Activated CD8-positive, alpha-beta T cell treated with anti-CD3 and anti-CD28 coated beads, Interleukin-2, amount 10 ng/mL, durations not matched to agents 7 days and 5 days (primary cell): ENCODE measurements at regions of chr3 and their contacts with region 1.

Region 1: GRCh38 chr3:170414202-170414663 is 4.4 kb upstream of the CLDN11 start:
- DNase-seq: peak; percentile 53
- ATAC-seq: peak; percentile 63
- H3K4me3 Mint-ChIP-seq: no peak overlapping the region
- H3K27ac Mint-ChIP-seq: no peak overlapping the region
- H3K4me1 Mint-ChIP-seq: peaks cover 7% of the 10 kb centered on the region
- H3K27me3 Mint-ChIP-seq: peaks cover 27% of the 10 kb centered on the region

Region 2: GRCh38 chr3:170211668-170212067 is 202.6 kb before region 1 on chr3:
- CTCF ChIA-PET with region 1: no interaction called
- POLR2A ChIA-PET with region 1: no interaction called
- DNase-seq: no peak
- ATAC-seq: no peak
- H3K4me3 Mint-ChIP-seq: no peak overlapping the region
- H3K27ac Mint-ChIP-seq: no peak overlapping the region
- H3K4me1 Mint-ChIP-seq: no peaks in the 10 kb centered on the region
- H3K27me3 Mint-ChIP-seq: peaks cover 6% of the 10 kb centered on the region

Region 3: GRCh38 chr3:170257145-170257544 is 157.1 kb before region 1 on chr3:
- CTCF ChIA-PET with region 1: no interaction called
- POLR2A ChIA-PET with region 1: no interaction called
- DNase-seq: no peak
- ATAC-seq: no peak
- H3K4me3 Mint-ChIP-seq: no peak overlapping the region
- H3K27ac Mint-ChIP-seq: peak overlapping the region; percentile 37
- H3K4me1 Mint-ChIP-seq: peaks cover 23% of the 10 kb centered on the region
- H3K27me3 Mint-ChIP-seq: no peaks in the 10 kb centered on the region

Region 4: GRCh38 chr3:170337420-170337819 is 76.8 kb before region 1 on chr3:
- CTCF ChIA-PET with region 1: no interaction called
- POLR2A ChIA-PET with region 1: no interaction called
- DNase-seq: no peak
- ATAC-seq: no peak
- H3K4me3 Mint-ChIP-seq: no peak overlapping the region
- H3K27ac Mint-ChIP-seq: no peak overlapping the region
- H3K4me1 Mint-ChIP-seq: no peaks in the 10 kb centered on the region
- H3K27me3 Mint-ChIP-seq: no peaks in the 10 kb centered on the region

Region 5: DNA sequence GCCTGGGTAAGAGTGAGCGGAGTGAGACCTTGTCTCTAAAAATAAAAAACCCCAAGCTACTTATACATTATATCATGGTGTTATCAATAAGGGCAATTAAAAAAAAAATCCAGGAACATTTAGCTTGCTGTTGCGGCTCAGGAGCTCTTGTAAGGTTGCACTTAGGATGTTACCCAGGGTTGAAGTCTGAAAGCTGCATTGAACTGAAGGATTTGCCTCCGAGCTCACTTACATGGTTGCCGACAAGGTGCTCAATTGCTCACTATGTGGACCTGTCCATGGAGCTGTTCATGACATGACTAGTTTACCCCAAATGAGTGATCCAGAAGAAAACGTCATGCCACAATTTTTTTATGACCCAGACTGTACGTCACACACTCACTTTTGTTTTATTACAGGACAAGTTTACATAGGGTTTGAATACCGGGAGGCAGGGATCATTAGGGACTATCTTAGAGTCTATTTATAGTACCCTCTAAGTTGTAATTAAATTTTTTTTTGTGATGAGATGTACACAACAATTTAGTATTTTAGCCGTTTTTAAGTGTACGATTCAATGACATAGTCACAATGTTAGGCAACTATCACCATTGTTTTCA is 16.6 kb before region 1 on chr3:
- CTCF ChIA-PET with region 1: interaction called, 23 read pairs
- POLR2A ChIA-PET with region 1: interaction called, 3 read pairs
- DNase-seq: no peak
- ATAC-seq: no peak
- H3K4me3 Mint-ChIP-seq: no peak overlapping the region
- H3K27ac Mint-ChIP-seq: no peak overlapping the region
- H3K4me1 Mint-ChIP-seq: no peaks in the 10 kb centered on the region
- H3K27me3 Mint-ChIP-seq: no peaks in the 10 kb centered on the region

Region 6: DNA sequence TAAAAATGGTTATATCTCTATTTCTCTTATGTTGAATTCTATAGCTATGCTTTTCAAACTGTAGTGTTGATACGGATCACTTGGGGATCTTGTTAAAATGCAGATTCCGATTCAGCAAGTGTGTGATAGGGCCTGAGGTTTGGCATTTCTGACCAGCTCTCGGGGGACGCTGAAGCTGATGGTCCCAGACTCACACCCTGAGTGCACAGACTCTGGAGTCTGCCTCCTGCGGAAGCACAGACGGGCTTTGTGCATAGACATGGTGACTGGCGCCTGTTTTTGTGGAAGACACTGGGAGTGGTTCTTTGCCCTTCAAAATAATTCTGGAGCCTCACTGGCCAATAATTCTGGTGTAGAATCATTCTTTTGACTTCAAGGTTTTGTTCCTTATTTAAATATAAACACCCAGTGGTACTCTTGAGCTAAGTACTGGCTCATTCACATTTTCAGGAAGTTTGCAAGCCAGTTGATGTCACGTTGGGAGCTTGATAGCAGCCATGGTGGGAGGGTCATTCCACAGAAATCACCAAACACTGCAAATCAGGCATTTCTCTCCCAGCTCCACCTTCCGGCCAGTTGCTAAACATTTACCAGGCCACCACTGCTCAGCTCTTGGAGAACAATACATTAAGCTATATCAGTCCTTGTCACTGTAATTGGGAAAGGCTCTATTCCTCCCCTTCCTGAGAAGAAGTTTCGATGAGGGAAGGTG is 23.6 kb after region 1 on chr3:
- CTCF ChIA-PET with region 1: interaction called, 10 read pairs
- POLR2A ChIA-PET with region 1: no interaction called
- DNase-seq: no peak
- ATAC-seq: no peak
- H3K4me3 Mint-ChIP-seq: no peak overlapping the region
- H3K27ac Mint-ChIP-seq: no peak overlapping the region
- H3K4me1 Mint-ChIP-seq: peaks cover 4% of the 10 kb centered on the region
- H3K27me3 Mint-ChIP-seq: peaks cover 7% of the 10 kb centered on the region

Region 7: GRCh38 chr3:170506556-170506955 is 92.3 kb after region 1 on chr3:
- CTCF ChIA-PET with region 1: no interaction called
- POLR2A ChIA-PET with region 1: no interaction called
- DNase-seq: no peak
- ATAC-seq: no peak
- H3K4me3 Mint-ChIP-seq: no peak overlapping the region
- H3K27ac Mint-ChIP-seq: no peak overlapping the region
- H3K4me1 Mint-ChIP-seq: no peaks in the 10 kb centered on the region
- H3K27me3 Mint-ChIP-seq: peaks cover 18% of the 10 kb centered on the region

Region 8: DNA sequence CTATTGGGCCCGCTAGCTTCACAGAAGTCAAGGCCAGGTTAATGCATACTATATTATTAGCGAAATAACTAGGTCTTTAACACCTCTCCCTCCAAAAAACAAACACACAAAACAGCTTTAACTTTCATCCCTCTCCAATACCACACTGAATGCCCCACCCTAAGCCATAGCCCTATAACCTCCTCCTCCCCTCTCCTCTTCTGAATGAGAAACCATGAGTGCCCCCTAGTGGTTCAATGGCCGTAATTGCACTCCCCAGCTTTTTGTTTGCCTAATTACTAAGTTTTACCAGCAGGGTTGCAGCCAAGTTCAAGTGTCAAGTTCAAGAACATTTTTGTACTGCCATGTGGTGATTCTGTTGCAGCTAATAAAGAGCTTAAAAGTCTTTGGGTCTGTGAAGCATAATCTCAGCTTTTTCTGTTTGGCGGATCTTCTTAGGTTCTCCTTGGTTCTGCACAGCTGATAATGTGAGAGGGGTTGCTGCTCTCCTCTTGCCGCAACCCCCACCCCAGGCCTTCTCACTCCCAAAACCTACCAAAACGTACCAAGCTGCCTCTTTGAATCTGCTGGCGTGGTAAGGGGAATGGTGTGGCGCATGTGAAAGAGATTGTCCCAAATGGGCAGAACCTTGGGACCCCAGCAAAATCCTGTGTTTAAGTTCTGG is 397.8 kb after region 1 on chr3:
- CTCF ChIA-PET with region 1: interaction called, 138 read pairs
- POLR2A ChIA-PET with region 1: no interaction called
- DNase-seq: peak; percentile 79
- ATAC-seq: peak; percentile 79
- H3K4me3 Mint-ChIP-seq: no peak overlapping the region
- H3K27ac Mint-ChIP-seq: no peak overlapping the region
- H3K4me1 Mint-ChIP-seq: peaks cover 2% of the 10 kb centered on the region
- H3K27me3 Mint-ChIP-seq: peaks cover 3% of the 10 kb centered on the region